Activated CD4-positive, alpha-beta memory T cell treated with anti-CD3 and anti-CD28 coated beads, Interleukin-2, amount 10 ng/mL, durations not matched to agents 7 days and 5 days (primary cell): ENCODE measurements at regions of chr11 and their contacts with region 1.

Region 1: DNA sequence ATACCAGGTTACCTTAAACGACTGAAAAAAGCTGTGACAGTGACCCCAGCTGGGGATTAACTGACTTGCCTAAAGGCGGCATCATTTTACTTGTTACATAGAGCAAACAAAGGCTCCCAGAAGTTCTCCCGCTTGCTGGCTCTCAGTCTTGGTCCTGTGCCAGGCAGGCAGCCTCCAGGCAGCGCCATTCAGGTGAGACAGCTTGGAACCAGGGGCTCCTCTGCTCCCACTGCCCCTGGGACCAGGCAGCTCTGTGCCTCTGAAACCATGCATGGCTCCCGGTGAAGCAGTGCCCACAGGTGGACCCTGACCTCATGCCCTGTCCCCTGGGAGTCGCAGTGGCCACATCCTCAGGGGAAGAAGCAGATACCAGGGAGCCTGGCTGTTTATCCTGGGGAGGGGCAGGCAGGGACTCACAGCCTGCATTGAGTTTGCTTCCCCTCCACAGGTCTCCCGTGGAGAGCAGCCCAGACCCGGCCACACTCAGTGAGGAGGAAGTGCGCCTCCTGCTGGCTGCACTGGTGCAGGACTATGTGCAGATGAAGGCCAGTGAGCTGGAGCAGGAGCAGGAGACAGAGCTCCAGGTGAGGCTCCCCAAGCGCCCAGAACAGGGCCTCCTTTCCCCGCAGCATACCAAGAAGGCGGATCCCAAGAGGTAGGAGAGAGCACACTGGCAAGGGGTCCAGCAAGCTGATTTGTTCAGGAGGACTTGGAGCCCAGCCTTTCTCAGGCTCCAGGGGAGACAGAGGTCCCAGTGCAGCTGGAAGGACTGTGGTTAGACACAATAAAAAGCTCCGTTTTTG is 15.6 kb upstream of the CYP2R1 start:
- DNase-seq: peak; percentile 89
- H3K4me3 Mint-ChIP-seq: no peak overlapping the region
- H3K27ac Mint-ChIP-seq: peak overlapping the region; percentile 56
- H3K4me1 Mint-ChIP-seq: peaks cover 49% of the 10 kb centered on the region
- H3K27me3 Mint-ChIP-seq: no peaks in the 10 kb centered on the region

Region 2: GRCh38 chr11:14529933-14530332 is 377.7 kb before region 1 on chr11:
- CTCF ChIA-PET with region 1: interaction called, 59 read pairs
- POLR2A ChIA-PET with region 1: interaction called, 3 read pairs
- DNase-seq: no peak
- H3K4me3 Mint-ChIP-seq: no peak overlapping the region
- H3K27ac Mint-ChIP-seq: no peak overlapping the region
- H3K4me1 Mint-ChIP-seq: no peaks in the 10 kb centered on the region
- H3K27me3 Mint-ChIP-seq: no peaks in the 10 kb centered on the region

Region 3: GRCh38 chr11:14643697-14644225 is 263.9 kb before region 1 on chr11 and contains the start of gene PDE3B:
- CTCF ChIA-PET with region 1: interaction called, 48 read pairs
- POLR2A ChIA-PET with region 1: interaction called, 24 read pairs
- DNase-seq: peak; percentile 85
- H3K4me3 Mint-ChIP-seq: peak within 1 kb of the TSS; percentile 92
- H3K27ac Mint-ChIP-seq: peak within 1 kb of the TSS; percentile 87
- H3K4me1 Mint-ChIP-seq: peaks cover 47% of the 10 kb centered on the region
- H3K27me3 Mint-ChIP-seq: no peaks in the 10 kb centered on the region
- total RNA-seq, gene PDE3B: 73.9 to 74.9 TPM

Region 4: GRCh38 chr11:14679662-14680061 is 227.9 kb before region 1 on chr11:
- CTCF ChIA-PET with region 1: no interaction called
- POLR2A ChIA-PET with region 1: no interaction called
- DNase-seq: no peak
- H3K4me3 Mint-ChIP-seq: no peak overlapping the region
- H3K27ac Mint-ChIP-seq: no peak overlapping the region
- H3K4me1 Mint-ChIP-seq: peaks cover 16% of the 10 kb centered on the region
- H3K27me3 Mint-ChIP-seq: no peaks in the 10 kb centered on the region

Region 5: GRCh38 chr11:14852571-14853177 is 54.9 kb before region 1 on chr11:
- CTCF ChIA-PET with region 1: interaction called, 14 read pairs
- POLR2A ChIA-PET with region 1: no interaction called
- DNase-seq: no peak
- H3K4me3 Mint-ChIP-seq: no peak overlapping the region
- H3K27ac Mint-ChIP-seq: no peak overlapping the region
- H3K4me1 Mint-ChIP-seq: peaks cover 5% of the 10 kb centered on the region
- H3K27me3 Mint-ChIP-seq: no peaks in the 10 kb centered on the region

Region 6: DNA sequence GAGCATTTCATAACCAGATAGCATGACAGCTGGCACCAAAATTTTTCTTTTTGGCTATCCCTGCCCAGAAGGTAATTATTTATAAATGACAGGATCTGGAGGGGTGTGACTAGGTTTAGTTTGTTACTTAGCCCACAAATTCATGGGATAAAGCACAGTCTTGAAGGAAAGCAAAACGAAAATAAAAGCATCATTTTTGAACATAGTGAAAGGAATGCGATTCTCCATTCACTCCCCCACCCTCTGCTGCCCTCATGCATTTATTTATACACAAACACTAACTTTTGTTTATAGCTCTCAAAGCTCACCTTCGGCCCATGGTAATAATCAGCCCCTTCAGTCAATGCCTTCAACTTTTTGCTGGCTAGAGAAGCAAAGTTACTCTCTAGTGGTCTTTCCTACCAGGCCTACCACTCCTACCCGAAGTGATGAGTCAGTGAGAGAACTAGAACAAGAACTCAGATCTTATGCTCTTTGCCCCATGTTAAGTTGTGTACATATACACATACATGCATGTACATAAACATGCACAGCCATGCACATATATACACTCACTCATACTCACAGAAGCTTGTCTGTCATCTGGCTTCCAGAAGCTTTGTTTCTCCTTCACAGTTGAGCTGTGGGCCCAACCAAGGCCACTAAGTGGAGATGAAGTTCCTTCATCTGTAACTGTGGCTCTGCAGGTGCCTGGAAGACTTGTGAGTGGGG is 42.0 kb after region 1 on chr11:
- CTCF ChIA-PET with region 1: interaction called, 10 read pairs
- POLR2A ChIA-PET with region 1: no interaction called
- DNase-seq: no peak
- H3K4me3 Mint-ChIP-seq: no peak overlapping the region
- H3K27ac Mint-ChIP-seq: no peak overlapping the region
- H3K4me1 Mint-ChIP-seq: no peaks in the 10 kb centered on the region
- H3K27me3 Mint-ChIP-seq: no peaks in the 10 kb centered on the region

Region 7: DNA sequence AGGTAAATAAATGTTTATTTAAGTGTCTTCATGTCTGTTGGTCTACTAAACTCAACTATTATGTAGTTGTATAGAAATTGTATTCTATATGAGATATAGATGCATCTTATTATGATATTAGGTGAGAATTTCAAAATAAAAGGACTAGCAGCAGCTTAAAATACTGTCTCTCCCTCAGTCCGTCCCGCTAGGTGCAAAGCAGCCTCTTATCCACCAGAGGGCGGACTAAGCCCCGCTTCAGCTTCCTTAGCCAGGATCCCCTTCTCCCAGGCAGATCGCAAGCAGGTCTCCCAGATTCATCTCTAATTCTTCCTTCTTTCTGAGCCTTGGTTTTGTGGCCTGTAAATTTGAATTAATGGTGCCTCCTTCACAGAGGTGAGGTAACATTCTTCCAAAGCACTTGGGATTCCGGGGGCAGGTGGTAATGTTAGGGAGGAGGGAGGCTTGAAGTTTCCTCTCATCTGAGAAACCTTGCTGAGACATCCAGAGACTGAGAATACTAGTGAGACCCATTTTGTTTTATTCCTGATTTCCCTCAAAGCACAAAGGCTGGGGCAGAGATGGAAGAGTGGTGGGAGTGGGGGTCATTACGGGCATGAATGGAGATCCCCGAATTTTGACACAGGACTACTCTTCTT is 193.6 kb after region 1 on chr11:
- CTCF ChIA-PET with region 1: interaction called, 14 read pairs
- POLR2A ChIA-PET with region 1: no interaction called
- DNase-seq: peak; percentile 62
- H3K4me3 Mint-ChIP-seq: no peak overlapping the region
- H3K27ac Mint-ChIP-seq: no peak overlapping the region
- H3K4me1 Mint-ChIP-seq: peaks cover 2% of the 10 kb centered on the region
- H3K27me3 Mint-ChIP-seq: peaks cover 33% of the 10 kb centered on the region